MCF 10A (cell line): ENCODE measurements at regions of chr11 and their contacts with region 1.

Region 1: DNA sequence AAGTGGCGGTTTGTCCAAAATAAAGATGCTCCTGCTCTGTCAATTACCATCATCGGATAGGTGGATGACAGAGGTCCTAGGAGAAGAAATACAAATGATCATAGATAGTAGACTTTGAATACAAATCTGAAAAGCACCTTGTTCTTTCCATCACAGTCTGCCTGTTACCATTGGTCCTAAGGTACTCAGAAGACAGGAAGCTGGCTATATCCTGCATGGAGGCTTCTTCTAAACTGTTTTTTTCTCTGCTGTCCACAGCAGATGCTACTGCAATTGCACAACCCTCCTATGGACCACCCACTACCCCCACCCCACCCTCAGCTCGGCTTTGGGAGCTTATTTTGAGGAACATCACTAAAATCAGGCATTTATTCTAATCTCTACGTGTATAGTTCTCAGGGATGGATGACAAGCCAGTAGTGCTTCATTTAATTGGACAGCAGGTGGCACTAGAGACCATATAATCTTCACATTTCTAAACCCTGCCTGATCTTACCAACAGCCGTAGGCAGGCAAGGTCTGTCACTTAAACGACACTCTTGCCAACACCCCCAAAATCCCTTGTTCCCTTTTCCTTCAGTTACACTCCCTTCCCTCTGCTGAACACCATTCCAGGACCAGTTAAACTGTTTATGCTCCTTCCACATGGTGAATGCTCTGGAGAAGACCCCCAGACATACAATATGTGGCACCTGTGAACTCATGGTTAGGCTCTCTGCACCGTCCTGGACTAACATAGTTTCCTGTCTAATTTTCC is 6.6 kb upstream of the PTS start:
- DNase-seq: peak; percentile 84
- H3K4me3 Mint-ChIP-seq: no peak overlapping the region
- H3K27ac Mint-ChIP-seq: peak overlapping the region; percentile 21
- H3K4me1 Mint-ChIP-seq: peaks cover 27% of the 10 kb centered on the region
- H3K27me3 Mint-ChIP-seq: no peaks in the 10 kb centered on the region
- CTCF ChIP-seq: peak; percentile 76

Region 2: DNA sequence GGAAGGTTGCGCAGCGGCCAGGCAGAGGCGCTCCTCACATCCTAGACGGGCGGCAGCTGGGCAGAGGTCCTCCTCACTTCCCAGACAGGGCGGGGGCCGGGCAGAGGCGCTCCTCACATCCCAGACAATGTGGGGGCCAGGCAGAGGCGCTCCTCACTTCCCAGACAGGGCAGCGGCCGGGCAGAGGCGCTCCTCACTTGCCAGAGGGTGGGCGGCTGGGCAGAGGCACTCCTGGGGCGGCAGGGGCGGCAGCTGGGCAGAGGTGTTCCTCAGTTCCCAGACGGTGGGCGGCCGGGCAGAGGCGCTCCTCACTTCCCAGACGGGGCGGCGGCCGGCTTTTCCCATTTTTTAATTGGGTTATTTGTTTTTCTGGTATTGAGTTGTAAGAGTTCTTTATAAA is 13.6 kb before region 1 on chr11:
- CTCF ChIA-PET with region 1: interaction called, 21 read pairs
- POLR2A ChIA-PET with region 1: no interaction called
- intact Hi-C with region 1: no loop called
- DNase-seq: no peak
- H3K4me3 Mint-ChIP-seq: no peak overlapping the region
- H3K27ac Mint-ChIP-seq: no peak overlapping the region
- H3K4me1 Mint-ChIP-seq: no peaks in the 10 kb centered on the region
- H3K27me3 Mint-ChIP-seq: no peaks in the 10 kb centered on the region
- CTCF ChIP-seq: no peak

Region 3: GRCh38 chr11:112555491-112556364 is 336.1 kb after region 1 on chr11:
- CTCF ChIA-PET with region 1: interaction called, 3 read pairs
- POLR2A ChIA-PET with region 1: no interaction called
- intact Hi-C with region 1: loop called (anchors 10 kb)
- DNase-seq: peak; percentile 57
- H3K4me3 Mint-ChIP-seq: no peak overlapping the region
- H3K27ac Mint-ChIP-seq: no peak overlapping the region
- H3K4me1 Mint-ChIP-seq: no peaks in the 10 kb centered on the region
- H3K27me3 Mint-ChIP-seq: peaks cover 16% of the 10 kb centered on the region
- CTCF ChIP-seq: peak; percentile 48